ENCODE measurements at regions of chr3 and their contacts with region 1.

Region 1: DNA sequence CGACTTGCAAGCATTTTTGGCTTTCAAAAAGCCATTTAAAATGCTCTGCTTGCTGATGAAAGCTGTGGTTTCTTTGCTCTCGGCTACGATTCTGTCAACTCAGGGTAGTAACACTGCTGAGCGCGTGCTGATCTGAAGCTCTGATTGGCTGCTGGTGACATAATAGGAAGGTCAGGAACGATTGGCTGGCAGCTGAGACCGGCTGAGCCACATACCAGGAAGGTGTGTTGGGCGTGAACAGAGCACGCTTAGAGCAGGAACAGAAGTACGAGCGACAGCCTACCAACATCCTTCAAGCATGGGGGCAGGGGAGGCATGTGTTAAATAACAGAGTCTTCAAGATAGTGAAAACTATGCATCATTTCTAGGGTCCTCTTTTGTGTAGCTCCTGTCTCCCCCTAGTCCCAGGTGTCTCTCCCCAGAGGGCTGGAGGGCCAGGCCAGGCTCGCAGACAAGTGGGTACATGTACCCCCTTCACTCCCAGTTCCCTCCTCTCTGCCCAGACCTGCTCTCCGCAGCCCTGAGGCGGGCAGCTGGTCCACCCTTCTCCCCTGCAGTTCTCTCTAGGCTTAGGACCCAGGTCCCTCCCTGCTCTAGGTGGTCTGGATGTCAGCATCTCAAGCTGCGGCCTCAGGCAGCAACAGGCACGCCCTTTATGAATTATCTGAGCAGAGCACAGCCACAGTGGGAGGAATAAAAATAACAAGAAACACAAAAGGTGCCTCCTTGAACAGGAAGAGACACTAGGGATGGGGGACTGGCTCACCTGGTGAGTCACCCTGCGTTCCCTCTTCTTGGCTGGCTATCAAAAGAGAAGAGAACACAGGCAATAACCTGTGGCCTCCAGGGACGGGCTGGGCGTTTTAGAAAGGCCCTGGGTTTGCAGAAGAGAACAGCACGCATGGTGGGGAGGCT is 76.0 kb downstream of the TAMM41 start:
- DNase-seq: peak; percentile 94
- H3K4me3 Mint-ChIP-seq: peak overlapping the region; percentile 24
- H3K27ac Mint-ChIP-seq: peak overlapping the region; percentile 83
- H3K4me1 Mint-ChIP-seq: peaks cover 19% of the 10 kb centered on the region
- H3K27me3 Mint-ChIP-seq: no peaks in the 10 kb centered on the region

Region 2: GRCh38 chr3:11719406-11720230 is 51.1 kb before region 1 on chr3:
- intact Hi-C with region 1: loop called (anchors 5 kb)
- DNase-seq: peak; percentile 87
- H3K4me3 Mint-ChIP-seq: peak overlapping the region; percentile 93
- H3K27ac Mint-ChIP-seq: peak overlapping the region; percentile 37
- H3K4me1 Mint-ChIP-seq: peaks cover 20% of the 10 kb centered on the region
- H3K27me3 Mint-ChIP-seq: peaks cover 29% of the 10 kb centered on the region

Region 3: GRCh38 chr3:11785024-11785377 is 14.3 kb after region 1 on chr3:
- intact Hi-C with region 1: loop called (anchors 2 kb)
- DNase-seq: peak; percentile 84
- H3K4me3 Mint-ChIP-seq: peak overlapping the region; percentile 72
- H3K27ac Mint-ChIP-seq: peak overlapping the region; percentile 92
- H3K4me1 Mint-ChIP-seq: peaks cover 18% of the 10 kb centered on the region
- H3K27me3 Mint-ChIP-seq: no peaks in the 10 kb centered on the region

Region 4: GRCh38 chr3:12221663-12222062 is 450.9 kb after region 1 on chr3:
- intact Hi-C with region 1: no loop called
- DNase-seq: no peak
- H3K4me3 Mint-ChIP-seq: no peak overlapping the region
- H3K27ac Mint-ChIP-seq: no peak overlapping the region
- H3K4me1 Mint-ChIP-seq: no peaks in the 10 kb centered on the region
- H3K27me3 Mint-ChIP-seq: peaks cover 5% of the 10 kb centered on the region

Measured in activated CD4-positive, alpha-beta T cell treated with anti-CD3 and anti-CD28 coated beads, Interleukin-2, amount 10 ng/mL, durations not matched to agents 24 days and 14 days (primary cell).